ENCODE measurements at regions of chr17 and their contacts with region 1.

Region 1: GRCh38 chr17:82351716-82352488 is 7.1 kb upstream of the TEX19 start:
- DNase-seq: peak; percentile 71 to 90 (median 84)
- H3K4me3 ChIP-seq: peak overlapping the region in 10 of 59 donors; percentile 2 to 33 (median 24)
- H3K27ac ChIP-seq: no peak overlapping the region
- H3K27me3 ChIP-seq: peaks cover 0 to 37% (median 10%) of the 10 kb centered on the region in 45 donors
- CTCF ChIP-seq: peak; percentile 94 to 99 (median 97)

Region 2: DNA sequence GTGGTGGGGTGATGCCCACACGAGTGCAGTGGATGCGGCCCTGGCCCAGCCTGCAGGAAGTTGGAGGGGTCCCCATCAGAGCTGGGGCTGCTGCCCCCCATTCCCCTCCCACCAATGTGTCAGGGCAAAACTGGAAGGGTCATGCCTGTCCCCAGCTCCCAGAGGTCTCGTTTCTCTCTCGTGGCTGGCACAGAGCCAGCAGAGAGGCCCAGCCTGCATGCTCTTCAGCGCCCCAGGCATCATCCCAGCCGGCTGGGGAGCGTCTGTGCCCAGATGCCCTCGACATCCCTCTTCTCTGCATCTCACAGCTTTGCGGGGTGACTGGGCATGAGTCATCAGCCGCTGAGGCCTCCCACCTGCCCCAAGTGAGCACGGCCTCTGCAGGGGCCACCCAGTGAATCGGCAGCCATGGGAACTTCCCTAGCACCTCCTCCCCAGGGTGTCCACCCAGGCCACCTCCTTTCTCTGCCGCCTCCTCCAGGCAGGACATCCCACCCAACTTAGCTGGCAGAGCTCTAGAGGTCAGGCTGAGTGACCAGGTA is 68.6 kb before region 1 on chr17:
- intact Hi-C with region 1: no loop called
- DNase-seq: no peak
- H3K4me3 ChIP-seq: no peak overlapping the region
- H3K27ac ChIP-seq: peak overlapping the region in 1 of 59 donors; percentile 63
- H3K27me3 ChIP-seq: no peaks in the 10 kb centered on the region
- CTCF ChIP-seq: no peak

Region 3: GRCh38 chr17:82418001-82418986 is 66.4 kb after region 1 on chr17 and contains the starts of genes HEXD and OGFOD3:
- intact Hi-C with region 1: loop called (anchors 2 to 5 kb)
- DNase-seq: peak; percentile 52 to 92 (median 76)
- H3K4me3 ChIP-seq: peak within 1 kb of the TSS; percentile 58 to 97 (median 87)
- H3K27ac ChIP-seq: peak within 1 kb of the TSS in 58 of 59 donors; percentile 59 to 97 (median 89)
- H3K27me3 ChIP-seq: no peaks in the 10 kb centered on the region
- CTCF ChIP-seq: peak in 12 of 56 donors; percentile 10 to 37 (median 24)
- total RNA-seq, gene HEXD: 15.3 to 59.1 (median 29.4) TPM
- total RNA-seq, gene OGFOD3: 20.4 to 48.6 (median 30.7) TPM

Region 4: GRCh38 chr17:82551779-82552457 is 200.0 kb after region 1 on chr17:
- intact Hi-C with region 1: loop called in 1 of 2 experiments (anchors 10 kb)
- DNase-seq: peak; percentile 43 to 70 (median 58)
- H3K4me3 ChIP-seq: peak overlapping the region in 1 of 59 donors; percentile 29
- H3K27ac ChIP-seq: peak overlapping the region in 52 of 59 donors; percentile 1 to 80 (median 54)
- H3K27me3 ChIP-seq: no peaks in the 10 kb centered on the region
- CTCF ChIP-seq: peak in 55 of 56 donors; percentile 26 to 74 (median 62)

Region 5: DNA sequence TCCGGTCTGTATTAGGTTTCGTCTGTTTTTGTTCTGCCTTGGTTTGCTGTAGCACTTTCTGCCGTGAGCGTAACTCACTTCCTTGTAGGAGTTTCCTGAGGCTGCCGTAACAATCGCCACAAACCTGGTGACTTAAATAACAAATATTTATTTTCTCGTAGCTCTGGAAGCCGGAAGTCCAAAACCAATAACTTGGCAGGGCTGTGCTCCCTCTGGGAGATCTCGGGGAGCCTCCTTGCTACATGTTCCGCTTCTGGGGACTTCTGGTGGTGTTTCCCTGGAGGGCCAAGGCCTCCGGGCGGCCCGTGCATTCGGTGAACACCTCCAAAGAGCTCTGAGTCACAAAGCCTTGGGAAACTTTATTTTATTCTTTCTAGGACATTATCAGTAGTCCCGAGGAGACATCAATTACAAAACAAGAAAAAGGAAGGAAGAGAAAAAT is 303.2 kb after region 1 on chr17:
- intact Hi-C with region 1: loop called in 1 of 2 experiments (anchors 10 kb)
- DNase-seq: peak in 1 of 10 donors; percentile 18
- H3K4me3 ChIP-seq: no peak overlapping the region
- H3K27ac ChIP-seq: peak overlapping the region in 38 of 59 donors; percentile 4 to 72 (median 32)
- H3K27me3 ChIP-seq: no peaks in the 10 kb centered on the region
- CTCF ChIP-seq: no peak

Region 6: DNA sequence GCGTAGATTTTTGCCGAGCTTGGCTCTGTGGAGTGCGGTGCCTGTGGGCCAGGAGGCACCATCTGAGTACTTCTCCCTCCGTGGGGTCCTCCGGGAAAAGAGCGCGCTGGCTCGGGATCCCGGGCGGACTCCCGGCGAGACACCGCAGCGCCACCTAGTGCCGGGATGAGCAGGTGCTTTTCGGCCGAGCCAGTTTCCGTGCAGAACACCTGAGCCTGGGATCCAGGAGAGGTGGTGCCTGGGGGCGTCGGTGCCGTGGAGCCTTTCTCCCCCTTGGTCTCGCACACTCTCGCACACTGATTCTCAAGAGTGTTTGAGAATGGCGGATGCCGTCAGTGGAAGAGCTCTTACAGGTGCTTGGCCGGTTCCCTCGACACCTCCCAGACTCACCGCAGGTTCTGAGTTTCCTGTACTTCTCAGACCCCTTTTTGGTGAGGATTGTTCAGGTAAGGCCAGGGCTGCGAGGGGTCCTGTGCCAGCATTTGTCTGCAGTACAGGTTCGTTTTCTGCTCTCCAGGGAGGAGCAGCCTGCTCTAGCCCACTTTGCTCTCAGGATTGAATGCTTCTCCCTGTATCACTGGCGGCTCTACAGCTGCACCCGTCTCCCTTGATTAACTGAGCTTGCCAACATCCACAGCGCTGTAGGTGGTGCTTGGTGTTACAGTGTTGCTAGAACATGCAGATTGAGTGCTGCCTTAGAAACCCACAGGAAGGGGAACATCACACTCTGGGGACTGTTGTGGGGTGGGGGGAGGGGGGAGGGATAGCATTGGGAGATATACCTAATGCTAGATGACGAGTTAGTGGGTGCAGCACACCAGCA is 423.3 kb after region 1 on chr17:
- intact Hi-C with region 1: loop called (anchors 10 kb)
- DNase-seq: peak; percentile 59 to 81 (median 68)
- H3K4me3 ChIP-seq: peak overlapping the region in 27 of 59 donors; percentile 0 to 47 (median 27)
- H3K27ac ChIP-seq: peak overlapping the region in 2 of 59 donors; percentile 2 to 48
- H3K27me3 ChIP-seq: no peaks in the 10 kb centered on the region
- CTCF ChIP-seq: peak; percentile 71 to 96 (median 88)